Activated T-helper 1 cell treated with anti-CD3 and anti-CD28 coated beads, Interleukin-12 subunit alpha, Interleukin-12 subunit beta, Interleukin-2, Interleukin-4 antibody, amounts not matched to agents 30 ng/mL and 10 ng/mL and 1 ng/mL, durations not matched to agents 14 hours and 24 hours and 36 hours (primary cell): ENCODE measurements at regions of chr10 and their contacts with region 1.

Region 1: DNA sequence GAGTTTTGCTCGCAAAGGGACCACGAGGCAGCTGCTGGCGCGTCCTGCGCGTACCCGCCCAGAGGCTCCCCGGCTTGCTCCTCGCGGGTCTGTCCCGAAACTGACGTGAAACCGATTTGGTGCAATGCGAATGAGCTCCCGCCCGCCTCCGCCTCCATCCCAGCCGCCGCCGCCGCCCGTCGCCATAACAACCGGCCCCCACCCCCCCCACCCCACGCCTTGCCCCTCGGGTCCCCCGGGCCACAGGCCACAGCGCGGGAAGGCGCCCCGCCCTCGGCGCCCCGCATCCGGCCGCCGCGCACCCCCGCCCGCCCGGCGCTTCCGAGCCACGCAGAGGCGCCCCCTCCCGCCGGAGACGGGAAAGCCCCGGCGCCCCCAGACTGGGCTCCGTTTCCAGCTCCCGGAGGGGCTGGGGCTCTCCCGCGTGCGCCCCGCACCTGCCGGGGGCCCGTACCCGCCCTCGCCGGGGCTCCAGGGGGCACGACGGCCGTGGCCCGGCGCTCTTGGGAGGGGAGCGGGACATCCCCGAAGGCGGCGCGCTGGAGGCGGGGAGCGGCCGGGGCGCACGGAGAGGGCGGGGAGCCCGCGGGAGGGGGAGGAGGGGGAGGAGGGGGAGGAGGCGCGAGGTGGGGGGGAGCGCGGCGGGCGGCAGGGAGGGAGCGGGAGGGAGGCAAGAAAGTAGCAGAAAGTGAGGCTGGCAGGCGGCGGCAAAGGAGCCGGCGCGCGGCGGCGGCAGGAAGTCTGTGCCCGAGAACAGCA is at the start of gene CAMK1D:
- DNase-seq: peak; percentile 79
- H3K4me3 Mint-ChIP-seq: peak within 1 kb of the TSS; percentile 90
- H3K27ac Mint-ChIP-seq: peak within 1 kb of the TSS; percentile 97
- H3K4me1 Mint-ChIP-seq: peaks cover 37% of the 10 kb centered on the region
- H3K27me3 Mint-ChIP-seq: peaks cover 60% of the 10 kb centered on the region
- total RNA-seq, gene CAMK1D: 6.8 and 7.4 TPM in 2 replicates

Region 2: GRCh38 chr10:11993834-11994468 is 355.1 kb before region 1 on chr10:
- intact Hi-C with region 1: no loop called
- DNase-seq: no peak
- H3K4me3 Mint-ChIP-seq: no peak overlapping the region
- H3K27ac Mint-ChIP-seq: no peak overlapping the region
- H3K4me1 Mint-ChIP-seq: peaks cover 9% of the 10 kb centered on the region
- H3K27me3 Mint-ChIP-seq: no peaks in the 10 kb centered on the region

Region 3: DNA sequence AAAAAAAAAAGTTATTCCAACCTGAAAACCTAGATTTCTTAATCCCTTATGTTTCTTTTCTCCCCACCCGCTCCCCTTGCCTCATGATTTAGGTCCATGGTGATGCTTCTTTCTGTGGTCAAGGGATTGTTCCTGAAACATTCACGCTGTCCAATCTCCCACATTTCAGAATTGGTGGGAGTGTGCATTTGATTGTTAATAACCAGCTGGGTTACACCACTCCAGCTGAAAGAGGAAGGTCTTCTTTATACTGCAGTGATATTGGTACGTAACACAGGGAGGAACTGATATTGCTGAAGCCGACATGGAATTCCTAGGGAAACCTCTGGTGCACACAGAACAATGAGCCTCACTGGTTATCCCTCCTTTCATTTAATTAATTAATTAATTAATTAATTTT is 257.6 kb before region 1 on chr10:
- intact Hi-C with region 1: no loop called
- DNase-seq: no peak
- H3K4me3 Mint-ChIP-seq: no peak overlapping the region
- H3K27ac Mint-ChIP-seq: no peak overlapping the region
- H3K4me1 Mint-ChIP-seq: no peaks in the 10 kb centered on the region
- H3K27me3 Mint-ChIP-seq: no peaks in the 10 kb centered on the region

Region 4: GRCh38 chr10:12241810-12242529 is 107.1 kb before region 1 on chr10:
- intact Hi-C with region 1: loop called (anchors 2 kb)
- DNase-seq: no peak
- H3K4me3 Mint-ChIP-seq: peak overlapping the region; percentile 59
- H3K27ac Mint-ChIP-seq: peak overlapping the region; percentile 80
- H3K4me1 Mint-ChIP-seq: peaks cover 26% of the 10 kb centered on the region
- H3K27me3 Mint-ChIP-seq: no peaks in the 10 kb centered on the region

Region 5: DNA sequence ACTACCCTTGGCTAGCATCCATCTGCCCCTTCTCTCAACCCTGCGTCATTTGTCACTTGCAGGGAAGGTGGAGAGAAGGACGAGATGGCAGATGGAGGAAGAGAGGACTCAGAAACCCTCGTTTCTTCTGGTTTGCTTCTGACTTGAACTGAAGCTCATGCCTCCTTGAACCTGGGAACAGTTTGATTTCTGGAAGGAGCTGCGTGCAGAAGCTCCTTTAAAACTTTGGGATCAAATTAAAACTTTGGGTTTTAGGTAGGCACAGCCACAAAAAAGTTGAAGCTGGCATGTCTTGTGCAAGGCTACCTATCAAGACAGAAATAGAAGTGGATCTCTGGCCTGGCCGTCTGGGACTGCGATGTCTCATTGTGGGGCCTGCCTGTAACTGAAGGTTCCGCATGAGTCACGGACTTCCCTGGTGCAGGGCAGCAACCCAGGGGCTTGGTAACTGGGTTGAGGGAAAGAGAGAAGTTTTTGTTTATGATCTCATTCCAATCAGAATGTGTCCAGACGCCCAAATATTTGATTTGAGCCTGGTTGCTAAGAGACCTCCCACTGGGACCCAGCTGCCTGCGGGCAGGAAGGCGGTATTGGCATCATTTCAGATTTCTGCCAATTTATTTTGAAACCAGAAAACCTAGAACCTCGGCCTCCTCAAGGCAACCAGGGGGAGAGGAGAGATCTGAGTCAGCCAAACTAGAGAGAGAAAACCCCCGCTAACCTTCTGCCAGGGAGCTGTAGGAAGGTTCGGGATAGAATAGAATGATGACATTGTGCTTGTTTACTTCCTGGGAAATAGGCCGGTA is 15.5 kb before region 1 on chr10:
- intact Hi-C with region 1: no loop called
- DNase-seq: no peak
- H3K4me3 Mint-ChIP-seq: no peak overlapping the region
- H3K27ac Mint-ChIP-seq: no peak overlapping the region
- H3K4me1 Mint-ChIP-seq: peaks cover 5% of the 10 kb centered on the region
- H3K27me3 Mint-ChIP-seq: peaks cover 9% of the 10 kb centered on the region

Region 6: DNA sequence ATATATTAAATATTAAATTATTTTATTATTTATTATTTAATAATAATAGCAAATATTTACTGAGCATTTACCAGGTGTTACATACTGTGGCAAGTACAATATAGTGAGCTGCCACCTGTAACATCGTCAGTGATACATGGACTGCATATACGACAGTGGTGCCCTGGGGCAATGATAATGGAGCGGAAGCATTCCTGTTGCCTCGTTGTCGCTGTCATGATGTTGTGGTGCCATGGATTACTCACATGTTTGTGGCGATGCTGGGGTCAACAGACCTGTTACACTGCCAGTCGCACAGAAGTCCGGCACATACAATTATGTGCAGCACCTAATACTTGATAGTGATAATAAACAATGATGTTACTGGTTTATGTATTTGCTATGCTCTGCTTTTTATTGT is 20.9 kb after region 1 on chr10:
- intact Hi-C with region 1: loop called (anchors 1 kb)
- DNase-seq: no peak
- H3K4me3 Mint-ChIP-seq: no peak overlapping the region
- H3K27ac Mint-ChIP-seq: no peak overlapping the region
- H3K4me1 Mint-ChIP-seq: peaks cover 18% of the 10 kb centered on the region
- H3K27me3 Mint-ChIP-seq: no peaks in the 10 kb centered on the region

Region 7: DNA sequence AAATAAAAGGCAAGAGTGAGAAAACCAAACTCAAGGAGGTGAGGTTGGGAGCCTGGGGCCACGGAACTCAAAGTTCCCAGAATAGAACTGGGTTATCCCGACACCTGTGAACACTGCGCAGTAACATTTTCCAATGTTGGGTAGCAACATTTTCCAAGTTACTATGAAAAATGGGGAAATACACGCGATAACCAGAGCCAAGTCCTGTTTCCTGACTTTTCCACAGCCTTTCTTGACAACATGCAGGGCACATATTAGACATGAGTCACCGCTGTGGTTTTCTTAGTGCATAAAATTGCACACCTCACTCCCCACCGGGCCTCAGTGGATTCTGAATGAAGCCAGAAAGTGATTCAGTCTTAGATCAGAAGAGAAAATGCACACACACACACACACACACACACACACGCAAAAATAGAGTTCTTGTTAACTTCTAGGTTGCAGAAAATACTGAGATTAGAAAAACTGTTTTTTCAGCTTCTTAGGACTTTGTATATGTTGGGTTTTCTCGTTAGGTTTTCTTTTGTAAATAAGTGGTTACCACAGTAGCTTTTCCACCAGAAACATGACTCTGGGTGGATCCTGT is 70.3 kb after region 1 on chr10:
- intact Hi-C with region 1: loop called (anchors 2 kb)
- DNase-seq: peak; percentile 25
- H3K4me3 Mint-ChIP-seq: peak overlapping the region; percentile 5
- H3K27ac Mint-ChIP-seq: peak overlapping the region; percentile 58
- H3K4me1 Mint-ChIP-seq: peaks cover 18% of the 10 kb centered on the region
- H3K27me3 Mint-ChIP-seq: peaks cover under 1% of the 10 kb centered on the region

Region 8: GRCh38 chr10:12644380-12645144 is 295.5 kb after region 1 on chr10:
- intact Hi-C with region 1: loop called (anchors 2 kb)
- DNase-seq: no peak
- H3K4me3 Mint-ChIP-seq: peak overlapping the region; percentile 38
- H3K27ac Mint-ChIP-seq: peak overlapping the region; percentile 85
- H3K4me1 Mint-ChIP-seq: peaks cover 27% of the 10 kb centered on the region
- H3K27me3 Mint-ChIP-seq: peaks cover 2% of the 10 kb centered on the region

Region 9: DNA sequence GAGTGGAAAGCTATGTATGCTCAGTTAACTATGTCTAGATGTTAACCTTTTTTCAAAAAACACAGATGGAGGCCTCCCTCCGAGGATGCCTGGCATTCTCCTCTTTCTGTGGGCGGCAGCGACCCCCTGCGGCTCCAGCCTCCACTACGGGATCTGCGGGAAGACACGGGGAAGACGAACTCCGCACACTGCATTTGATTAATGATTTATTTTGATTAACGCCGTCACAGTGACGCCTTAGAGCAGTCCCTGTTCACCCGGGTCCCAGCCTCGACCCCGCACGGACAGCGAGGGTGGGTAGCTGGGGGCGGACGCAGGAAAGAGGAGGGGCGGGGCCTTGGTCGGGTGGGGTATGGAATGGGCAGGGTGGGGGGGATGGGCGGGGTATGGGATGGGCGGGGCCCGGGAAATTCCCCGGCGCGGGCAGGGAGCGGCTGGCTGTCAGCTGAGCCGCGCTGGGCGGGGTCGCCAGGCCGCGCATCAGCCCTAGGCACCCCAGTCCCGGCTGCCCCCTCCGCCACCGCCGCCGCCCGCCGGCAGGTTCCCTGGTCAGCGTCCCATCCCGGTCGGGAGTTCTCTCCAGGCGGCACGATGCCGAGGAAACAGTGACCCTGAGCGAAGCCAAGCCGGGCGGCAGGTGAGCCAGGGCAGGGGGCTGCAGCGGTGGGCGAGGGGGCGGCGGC is 750.8 kb after region 1 on chr10 and contains the start of gene OPTN:
- intact Hi-C with region 1: loop called (anchors 10 kb)
- DNase-seq: peak; percentile 73
- H3K4me3 Mint-ChIP-seq: peak within 1 kb of the TSS; percentile 93
- H3K27ac Mint-ChIP-seq: peak within 1 kb of the TSS; percentile 92
- H3K4me1 Mint-ChIP-seq: peaks cover 55% of the 10 kb centered on the region
- H3K27me3 Mint-ChIP-seq: no peaks in the 10 kb centered on the region
- total RNA-seq, gene OPTN: 52.6 and 54.1 TPM in 2 replicates